Motor neuron (in vitro differentiated cells): ENCODE measurements at regions of chr17 and their contacts with region 1.

Region 1: GRCh38 chr17:43940630-43941029 is 1.6 kb downstream of the PPY start:
- ATAC-seq: peak in 7 of 8 experiments; percentile 4 to 69 (median 40)
- H3K4me3 ChIP-seq: no peak overlapping the region
- H3K27ac ChIP-seq: no peak overlapping the region
- H3K4me1 ChIP-seq: peaks cover 5 to 9% of the 10 kb centered on the region in 2 donors

Region 2: GRCh38 chr17:43823350-43824084 is 117.1 kb before region 1 on chr17:
- in situ Hi-C with region 1: no loop called
- ATAC-seq: no peak
- H3K4me3 ChIP-seq: no peak overlapping the region
- H3K27ac ChIP-seq: no peak overlapping the region
- H3K4me1 ChIP-seq: no peaks in the 10 kb centered on the region

Region 3: DNA sequence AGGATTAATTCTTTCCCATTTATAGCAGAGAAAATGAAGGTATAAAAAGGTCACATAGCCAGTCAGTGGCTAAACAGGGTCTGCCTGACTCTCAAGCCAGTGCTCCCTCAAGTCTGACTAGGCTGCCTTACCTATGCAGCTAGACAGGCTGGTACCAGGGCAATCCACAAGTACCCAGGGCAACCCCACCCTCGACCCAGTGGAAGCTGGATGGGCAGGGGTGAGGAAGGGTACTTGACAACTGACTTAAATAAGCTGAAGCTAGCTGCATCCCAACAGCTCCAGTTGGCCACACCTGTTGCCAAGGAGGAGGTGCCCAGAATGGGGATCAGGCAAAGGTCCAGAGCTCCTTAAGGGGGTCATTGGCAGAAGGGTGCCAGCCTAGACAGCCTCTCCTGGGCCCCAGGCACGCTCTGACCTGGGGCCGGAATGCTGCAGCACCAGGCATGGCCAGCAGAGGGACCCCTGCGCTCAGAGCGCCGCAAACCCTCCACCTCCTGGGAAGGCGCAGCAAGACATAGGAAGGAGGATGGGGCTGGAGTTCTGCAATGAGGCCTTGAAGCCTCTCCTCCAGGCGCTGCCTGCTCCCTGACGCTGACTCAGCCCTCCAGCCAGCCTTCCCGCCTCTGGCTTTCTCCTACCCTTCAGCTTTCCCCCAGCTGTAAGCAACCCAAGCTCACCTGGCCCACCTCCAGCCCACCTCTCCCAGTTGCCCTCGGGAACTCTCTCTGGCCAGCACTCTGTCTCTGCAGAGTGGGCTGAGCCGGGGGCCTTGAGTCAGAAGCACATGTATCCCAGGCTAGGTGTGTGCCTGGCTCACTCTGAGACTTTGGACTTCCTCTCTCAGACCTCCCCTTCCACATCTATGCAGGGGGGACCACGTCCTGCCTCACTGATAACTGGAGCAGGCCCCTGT is 62.1 kb before region 1 on chr17:
- in situ Hi-C with region 1: no loop called
- ATAC-seq: peak; percentile 94 to 99 (median 97)
- H3K4me3 ChIP-seq: no peak overlapping the region
- H3K27ac ChIP-seq: no peak overlapping the region
- H3K4me1 ChIP-seq: peaks cover 4% of the 10 kb centered on the region in 2 donors

Region 4: GRCh38 chr17:43994272-43995149 is 53.9 kb after region 1 on chr17:
- in situ Hi-C with region 1: loop called in 3 of 9 experiments (anchors 5 to 10 kb)
- ATAC-seq: peak; percentile 92 to 98 (median 97)
- H3K4me3 ChIP-seq: peak overlapping the region; percentile 10 to 24 (median 21)
- H3K27ac ChIP-seq: no peak overlapping the region
- H3K4me1 ChIP-seq: no peaks in the 10 kb centered on the region

Region 5: DNA sequence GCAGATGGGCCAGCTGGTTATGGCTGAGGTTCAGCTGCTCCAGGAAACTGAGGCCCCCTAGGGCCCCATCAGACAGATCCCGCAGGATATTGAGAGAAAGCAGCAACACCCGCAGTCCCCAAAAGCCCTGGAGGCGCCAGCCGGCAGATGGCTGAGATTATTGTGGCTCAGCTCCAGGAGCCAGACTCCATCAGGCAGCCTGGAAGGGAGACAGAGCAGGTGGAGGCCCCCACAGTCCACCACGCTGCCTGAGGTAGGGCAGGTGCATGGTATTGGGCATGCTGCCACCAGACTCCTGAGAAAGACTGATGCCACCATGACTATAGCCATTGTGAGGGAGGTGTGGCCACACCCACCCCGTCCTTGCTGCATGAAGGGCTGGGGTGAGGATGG is 83.6 kb after region 1 on chr17:
- in situ Hi-C with region 1: no loop called
- ATAC-seq: peak in 4 of 8 experiments; percentile 13 to 29 (median 20)
- H3K4me3 ChIP-seq: no peak overlapping the region
- H3K27ac ChIP-seq: no peak overlapping the region
- H3K4me1 ChIP-seq: no peaks in the 10 kb centered on the region